ENCODE measurements at regions of chr17 and their contacts with region 1.

Region 1: GRCh38 chr17:39621523-39622379 is 5.0 kb upstream of the PPP1R1B start:
- DNase-seq: peak; percentile 77 to 93 (median 84)
- ATAC-seq: peak; percentile 67 to 79 (median 74)
- H3K4me3 ChIP-seq: no peak overlapping the region
- H3K27ac ChIP-seq: no peak overlapping the region
- H3K4me1 ChIP-seq: peaks cover 0 to 31% (median 10%) of the 10 kb centered on the region in 12 donors
- H3K27me3 ChIP-seq: peaks cover 0 to 23% (median 19%) of the 10 kb centered on the region in 9 donors
- CTCF ChIP-seq: peak; percentile 99 to 100 (median 100)
- POLR2A ChIP-seq: no peak

Region 2: DNA sequence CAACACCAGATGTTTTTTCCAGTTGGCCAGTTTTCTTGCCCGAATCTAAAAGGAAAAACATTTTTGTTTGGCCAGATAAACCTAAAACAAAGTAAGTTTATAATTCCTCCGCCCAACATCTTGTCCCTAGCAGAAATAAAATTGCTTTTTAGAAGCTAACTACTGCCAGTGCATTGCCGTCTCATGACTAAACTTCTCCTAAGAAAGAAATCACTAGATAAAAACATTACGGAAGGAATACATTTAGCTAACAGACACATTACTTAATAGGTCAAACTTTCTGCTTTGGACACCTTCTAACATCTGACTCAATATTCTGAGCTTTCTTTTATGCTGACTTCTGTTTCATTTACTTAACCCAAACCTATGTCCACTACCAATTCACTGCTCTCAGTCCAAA is 256.5 kb before region 1 on chr17:
- intact Hi-C with region 1: no loop called
- DNase-seq: no peak
- ATAC-seq: peak in 3 of 4 donors; percentile 60 to 80 (median 72)
- H3K4me3 ChIP-seq: peak overlapping the region in 4 of 12 donors; percentile 6 to 29 (median 14)
- H3K27ac ChIP-seq: peak overlapping the region in 11 of 12 donors; percentile 17 to 66 (median 48)
- H3K4me1 ChIP-seq: peaks cover 0 to 50% (median 26%) of the 10 kb centered on the region in 12 donors
- H3K27me3 ChIP-seq: no peaks in the 10 kb centered on the region
- CTCF ChIP-seq: no peak
- POLR2A ChIP-seq: no peak

Region 3: DNA sequence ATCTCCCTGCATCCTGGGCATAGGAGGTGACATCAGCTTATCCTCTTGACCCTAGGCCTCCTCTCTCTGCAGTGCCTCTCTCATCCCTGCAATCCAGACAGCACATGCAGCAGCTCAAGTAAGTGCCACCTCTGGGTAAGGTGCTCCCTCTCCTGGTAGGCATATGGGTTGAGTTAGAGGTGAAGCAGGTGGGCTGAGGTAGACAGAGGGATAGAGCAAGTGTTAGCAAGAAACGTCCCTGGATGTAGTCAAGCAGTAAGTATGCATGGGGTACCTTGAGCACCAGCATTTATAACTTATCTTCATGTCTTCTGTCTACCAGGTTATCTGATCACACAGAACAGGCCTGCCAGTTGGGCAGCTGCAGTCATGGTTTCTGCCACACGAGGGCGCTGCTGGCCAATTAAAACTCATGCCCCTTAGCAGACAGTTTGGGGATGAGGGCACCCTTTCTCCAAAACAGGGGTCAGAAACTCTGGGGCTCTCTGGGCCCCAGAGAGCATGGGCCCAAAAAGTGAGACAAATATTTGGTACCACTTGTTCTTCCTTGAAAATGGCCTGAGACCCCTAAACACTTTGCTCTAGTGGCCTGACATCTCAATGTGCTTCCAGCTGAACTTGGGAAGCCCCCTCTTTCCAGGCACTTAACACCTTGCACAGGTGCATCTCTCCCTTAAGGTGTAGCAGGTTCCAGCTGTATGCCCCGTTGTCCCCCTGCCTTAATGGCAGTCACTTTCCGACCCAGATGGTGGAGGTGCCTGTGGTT is 73.9 kb before region 1 on chr17:
- intact Hi-C with region 1: loop called (anchors 1 to 2 kb)
- DNase-seq: peak; percentile 34 to 82 (median 53)
- ATAC-seq: peak; percentile 50 to 81 (median 71)
- H3K4me3 ChIP-seq: no peak overlapping the region
- H3K27ac ChIP-seq: no peak overlapping the region
- H3K4me1 ChIP-seq: peaks cover 0 to 27% (median 10%) of the 10 kb centered on the region in 12 donors
- H3K27me3 ChIP-seq: no peaks in the 10 kb centered on the region
- CTCF ChIP-seq: peak; percentile 84 to 96 (median 93)
- POLR2A ChIP-seq: no peak

Region 4: GRCh38 chr17:39668199-39668966 is 46.6 kb after region 1 on chr17 and contains the start of gene PNMT:
- intact Hi-C with region 1: loop called in 5 of 10 experiments (anchors 2 to 10 kb)
- DNase-seq: peak; percentile 78 to 88 (median 83)
- ATAC-seq: peak in 1 of 4 donors; percentile 8
- H3K4me3 ChIP-seq: peak within 1 kb of the TSS; percentile 36 to 78 (median 64)
- H3K27ac ChIP-seq: peak within 1 kb of the TSS; percentile 85 to 99 (median 96)
- H3K4me1 ChIP-seq: peaks cover 0 to 83% (median 34%) of the 10 kb centered on the region in 12 donors
- H3K27me3 ChIP-seq: peaks cover 0 to 40% (median 11%) of the 10 kb centered on the region in 9 donors
- CTCF ChIP-seq: peak; percentile 52 to 78 (median 64)
- POLR2A ChIP-seq: no peak
- total RNA-seq, gene PNMT: 2.4 to 7.9 (median 6.0) TPM

Region 5: GRCh38 chr17:39754161-39754951 is 132.6 kb after region 1 on chr17:
- intact Hi-C with region 1: loop called (anchors 1 to 5 kb)
- DNase-seq: peak; percentile 92 to 98 (median 95)
- ATAC-seq: peak; percentile 88 to 95 (median 94)
- H3K4me3 ChIP-seq: peak overlapping the region; percentile 29 to 89 (median 71)
- H3K27ac ChIP-seq: peak overlapping the region; percentile 75 to 98 (median 93)
- H3K4me1 ChIP-seq: peaks cover 0 to 43% (median 25%) of the 10 kb centered on the region in 12 donors
- H3K27me3 ChIP-seq: no peaks in the 10 kb centered on the region
- CTCF ChIP-seq: peak; percentile 84 to 99 (median 96)
- POLR2A ChIP-seq: peak in 1 of 2 donors; percentile 67

Region 6: GRCh38 chr17:39980351-39981206 is 358.8 kb after region 1 on chr17 and contains the start of gene PSMD3:
- intact Hi-C with region 1: loop called in 2 of 10 experiments (anchors 2 to 10 kb)
- DNase-seq: peak; percentile 98
- ATAC-seq: peak; percentile 96 to 99 (median 98)
- H3K4me3 ChIP-seq: peak within 1 kb of the TSS; percentile 74 to 100 (median 95)
- H3K27ac ChIP-seq: peak within 1 kb of the TSS; percentile 70 to 99 (median 92)
- H3K4me1 ChIP-seq: peaks cover 7 to 34% (median 23%) of the 10 kb centered on the region in 12 donors
- H3K27me3 ChIP-seq: peaks cover 0 to 3% (median 0%) of the 10 kb centered on the region in 9 donors
- CTCF ChIP-seq: peak; percentile 66 to 94 (median 80)
- POLR2A ChIP-seq: peak; percentile 15 to 86
- total RNA-seq, gene PSMD3: 68.9 to 117 (median 83.3) TPM